ENCODE measurements at regions of chr15 and their contacts with region 1.

Region 1: GRCh38 chr15:58921267-58921790 is 12.2 kb downstream of the SLTM start:
- DNase-seq: no peak
- ATAC-seq: no peak
- H3K4me3 Mint-ChIP-seq: no peak overlapping the region
- H3K27ac Mint-ChIP-seq: no peak overlapping the region
- H3K4me1 Mint-ChIP-seq: peaks cover 28% of the 10 kb centered on the region
- H3K27me3 Mint-ChIP-seq: no peaks in the 10 kb centered on the region
- CTCF ChIP-seq: no peak

Region 2: DNA sequence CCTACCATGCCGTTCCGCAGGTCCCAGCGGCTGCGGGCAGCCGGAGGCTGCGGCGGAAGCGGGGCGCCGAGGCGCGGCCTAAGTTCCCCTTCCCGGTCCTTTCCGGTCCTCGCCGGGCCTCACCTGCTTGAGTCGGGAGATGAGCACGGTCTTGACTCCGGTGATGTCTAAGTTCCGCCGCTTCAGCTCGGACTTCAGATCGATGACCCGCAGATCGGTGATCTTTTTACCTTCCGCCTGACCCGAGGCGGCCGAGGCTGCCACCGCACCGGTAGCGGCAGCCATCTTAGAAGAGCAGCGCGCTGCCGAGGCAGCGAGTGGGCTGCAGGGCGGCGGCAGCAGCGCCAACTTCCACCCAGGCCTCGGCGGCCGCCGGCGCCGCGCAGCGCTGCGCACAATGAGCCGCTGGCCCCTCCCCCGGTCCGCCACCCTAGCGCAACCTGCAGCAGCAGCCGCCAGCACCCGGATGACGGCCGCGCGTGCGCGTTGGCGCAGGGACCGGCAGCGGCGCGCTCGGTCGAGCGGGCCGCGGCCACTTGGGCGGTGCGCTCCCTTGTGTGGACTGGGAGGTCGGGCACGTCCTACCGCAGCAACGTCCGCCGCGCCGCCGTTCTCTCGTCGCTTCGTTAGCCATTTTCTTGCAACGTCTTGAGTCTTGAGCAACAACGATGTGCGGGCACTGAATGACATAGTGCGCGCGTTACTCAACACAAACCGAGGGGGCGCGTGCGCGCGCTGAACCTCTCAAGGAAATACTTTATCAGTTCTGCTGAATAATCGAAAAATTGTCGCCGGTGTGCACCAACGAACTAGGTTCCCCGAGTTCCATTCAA is 12.2 kb after region 1 on chr15 and contains the start of gene SLTM:
- CTCF ChIA-PET with region 1: interaction called, 4 read pairs
- POLR2A ChIA-PET with region 1: interaction called, 11 read pairs
- intact Hi-C with region 1: no loop called
- DNase-seq: peak; percentile 95
- ATAC-seq: peak; percentile 95
- H3K4me3 Mint-ChIP-seq: peak within 1 kb of the TSS; percentile 98
- H3K27ac Mint-ChIP-seq: peak within 1 kb of the TSS; percentile 99
- H3K4me1 Mint-ChIP-seq: peaks cover 13% of the 10 kb centered on the region
- H3K27me3 Mint-ChIP-seq: no peaks in the 10 kb centered on the region
- CTCF ChIP-seq: peak; percentile 29
- total RNA-seq, gene SLTM: 79.8 to 89.9 TPM

Measured in activated CD8-positive, alpha-beta T cell treated with anti-CD3 and anti-CD28 coated beads for 36 hours (primary cell).